ENCODE measurements at regions of chr19 and their contacts with region 1.

Region 1: GRCh38 chr19:43934985-43935708 is at the start of gene ZNF45:
- DNase-seq: peak; percentile 81
- H3K4me3 Mint-ChIP-seq: peak within 1 kb of the TSS; percentile 95
- H3K27ac Mint-ChIP-seq: peak within 1 kb of the TSS; percentile 83
- H3K4me1 Mint-ChIP-seq: peaks cover 20% of the 10 kb centered on the region
- H3K27me3 Mint-ChIP-seq: no peaks in the 10 kb centered on the region
- total RNA-seq, gene ZNF45: 11.5 and 13.1 TPM in 2 replicates

Region 2: GRCh38 chr19:43923875-43924274 is 11.3 kb before region 1 on chr19:
- intact Hi-C with region 1: no loop called
- DNase-seq: no peak
- H3K4me3 Mint-ChIP-seq: no peak overlapping the region
- H3K27ac Mint-ChIP-seq: no peak overlapping the region
- H3K4me1 Mint-ChIP-seq: no peaks in the 10 kb centered on the region
- H3K27me3 Mint-ChIP-seq: no peaks in the 10 kb centered on the region

Region 3: DNA sequence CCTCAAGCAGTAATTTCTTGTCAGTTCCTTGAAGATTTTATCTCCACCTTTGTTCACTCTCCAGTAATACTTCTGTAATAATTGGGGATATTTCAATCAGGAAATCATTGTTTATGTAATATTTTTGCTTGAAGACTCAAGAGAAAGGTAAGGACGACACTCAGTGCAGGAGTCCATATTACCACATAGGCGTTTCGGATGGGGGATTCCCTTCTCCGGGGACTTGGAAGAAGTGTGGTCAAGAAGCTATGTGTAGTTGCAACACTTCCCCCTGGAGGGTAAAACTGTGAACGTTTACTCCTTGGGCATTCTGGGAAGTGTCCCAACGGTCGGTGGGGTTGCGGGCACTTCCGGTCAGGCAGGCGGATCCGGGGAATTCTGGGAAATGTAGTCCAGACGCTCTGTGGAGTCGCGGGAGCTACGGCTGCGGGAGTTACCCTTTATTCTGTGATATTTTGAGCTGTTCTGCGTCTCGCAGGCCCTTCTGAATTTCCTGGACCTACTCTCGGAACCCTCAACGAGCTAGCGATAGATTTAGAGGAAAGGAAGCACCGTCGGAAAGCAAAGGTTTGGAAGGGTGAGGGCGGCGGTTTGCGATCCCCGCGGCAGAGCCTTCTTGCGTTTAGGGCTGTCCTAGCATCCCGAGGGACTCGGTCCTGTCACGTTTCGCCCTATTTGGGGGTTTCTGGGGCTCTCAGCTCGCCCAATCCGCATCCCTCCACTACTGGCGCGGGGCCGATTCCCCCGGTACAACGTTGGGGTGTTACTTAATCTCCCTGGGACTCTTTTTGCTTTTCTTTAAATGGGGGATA is 15.9 kb after region 1 on chr19 and contains the start of gene ZNF221:
- intact Hi-C with region 1: loop called (anchors 1 kb)
- DNase-seq: peak; percentile 50
- H3K4me3 Mint-ChIP-seq: peak within 1 kb of the TSS; percentile 94
- H3K27ac Mint-ChIP-seq: peak within 1 kb of the TSS; percentile 66
- H3K4me1 Mint-ChIP-seq: peaks cover 11% of the 10 kb centered on the region
- H3K27me3 Mint-ChIP-seq: no peaks in the 10 kb centered on the region
- total RNA-seq, gene ZNF221: 0.56 and 0.75 TPM in 2 replicates

Region 4: DNA sequence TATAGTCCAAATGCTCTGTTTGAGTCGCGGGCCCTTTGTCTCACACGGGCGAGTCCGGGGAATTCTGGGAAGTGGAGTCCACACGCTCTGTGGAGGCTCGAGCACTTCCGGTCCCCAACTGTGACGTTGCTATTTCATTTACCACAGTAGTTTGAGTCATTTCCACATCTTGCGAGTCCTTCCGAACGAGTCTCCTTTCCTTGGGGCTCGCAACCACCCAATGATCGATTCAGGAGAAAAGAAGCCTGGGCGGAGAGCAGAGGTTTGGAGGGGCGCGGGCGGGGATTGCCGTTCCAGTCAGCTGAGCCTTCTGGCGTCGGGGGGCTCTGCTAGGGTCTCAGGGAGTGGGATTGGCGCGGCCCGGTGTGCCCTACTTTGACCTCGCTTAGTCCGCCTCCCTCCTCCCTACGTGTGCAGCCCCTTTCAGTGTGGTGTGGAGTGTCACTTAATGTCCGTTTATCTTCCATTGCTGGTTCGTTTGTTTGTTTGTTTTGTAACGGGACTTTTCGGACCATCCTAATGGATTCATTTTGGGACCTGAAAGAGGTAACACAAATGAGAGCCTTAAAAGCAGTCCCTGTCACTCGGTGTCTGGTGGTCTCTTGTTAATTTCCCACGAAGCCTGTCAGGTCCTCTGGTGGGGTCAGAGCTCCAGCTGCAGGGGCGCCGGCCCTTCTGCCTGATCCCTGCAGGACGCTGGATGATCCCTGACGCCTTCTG is 90.2 kb after region 1 on chr19 and contains the start of gene ZNF222:
- intact Hi-C with region 1: loop called (anchors 1 kb)
- DNase-seq: peak; percentile 69
- H3K4me3 Mint-ChIP-seq: peak within 1 kb of the TSS; percentile 96
- H3K27ac Mint-ChIP-seq: peak within 1 kb of the TSS; percentile 85
- H3K4me1 Mint-ChIP-seq: peaks cover 18% of the 10 kb centered on the region
- H3K27me3 Mint-ChIP-seq: no peaks in the 10 kb centered on the region
- total RNA-seq, gene ZNF222: 1.2 and 1.5 TPM in 2 replicates

Region 5: DNA sequence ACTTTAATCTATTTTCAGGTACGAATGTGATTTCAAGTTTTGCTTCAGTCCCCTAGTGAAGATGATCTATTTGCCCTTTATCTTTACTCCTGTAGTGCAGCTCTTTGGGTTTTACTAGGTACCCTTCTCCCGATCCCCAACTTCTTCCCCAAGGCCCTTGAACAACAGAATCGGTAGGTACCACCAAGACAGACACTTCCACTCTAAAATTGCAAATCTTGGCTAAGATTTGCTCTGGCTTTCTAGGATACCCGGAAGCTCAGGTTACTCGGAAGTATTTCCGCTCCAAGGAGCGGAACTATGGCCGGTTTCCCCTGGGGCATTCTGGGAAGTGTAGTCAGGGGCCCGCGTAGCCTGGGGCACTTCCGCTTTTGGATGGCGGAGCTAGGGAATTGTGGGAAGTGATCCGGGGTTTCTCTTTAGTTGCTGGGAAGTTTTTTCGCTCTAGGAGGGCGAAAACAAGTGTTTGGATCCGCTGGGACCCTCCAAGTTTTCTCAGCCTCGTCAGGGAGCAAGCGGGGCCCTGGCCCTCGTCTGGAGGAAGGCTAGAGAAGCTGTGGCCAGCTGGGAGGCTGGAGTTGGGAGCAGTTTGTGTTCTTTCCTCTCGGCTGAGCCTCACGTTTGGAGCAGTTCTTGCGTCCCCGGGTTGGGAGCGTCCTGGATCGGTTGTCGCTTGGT is 272.1 kb after region 1 on chr19:
- intact Hi-C with region 1: loop called (anchors 1 kb)
- DNase-seq: peak; percentile 73
- H3K4me3 Mint-ChIP-seq: peak overlapping the region; percentile 86
- H3K27ac Mint-ChIP-seq: peak overlapping the region; percentile 69
- H3K4me1 Mint-ChIP-seq: peaks cover 16% of the 10 kb centered on the region
- H3K27me3 Mint-ChIP-seq: peaks cover 2% of the 10 kb centered on the region

Measured in activated T-helper 1 cell treated with anti-CD3 and anti-CD28 coated beads, Interleukin-12 subunit alpha, Interleukin-12 subunit beta, Interleukin-2, Interleukin-4 antibody, amounts not matched to agents 30 ng/mL and 10 ng/mL and 1 ng/mL, durations not matched to agents 14 hours and 24 hours and 36 hours (primary cell).